Activated CD4-positive, alpha-beta T cell treated with anti-CD3 and anti-CD28 coated beads, Interleukin-2, amount 10 ng/mL, durations not matched to agents 24 days and 14 days (primary cell): ENCODE measurements at regions of chr14 and their contacts with region 1.

Region 1: DNA sequence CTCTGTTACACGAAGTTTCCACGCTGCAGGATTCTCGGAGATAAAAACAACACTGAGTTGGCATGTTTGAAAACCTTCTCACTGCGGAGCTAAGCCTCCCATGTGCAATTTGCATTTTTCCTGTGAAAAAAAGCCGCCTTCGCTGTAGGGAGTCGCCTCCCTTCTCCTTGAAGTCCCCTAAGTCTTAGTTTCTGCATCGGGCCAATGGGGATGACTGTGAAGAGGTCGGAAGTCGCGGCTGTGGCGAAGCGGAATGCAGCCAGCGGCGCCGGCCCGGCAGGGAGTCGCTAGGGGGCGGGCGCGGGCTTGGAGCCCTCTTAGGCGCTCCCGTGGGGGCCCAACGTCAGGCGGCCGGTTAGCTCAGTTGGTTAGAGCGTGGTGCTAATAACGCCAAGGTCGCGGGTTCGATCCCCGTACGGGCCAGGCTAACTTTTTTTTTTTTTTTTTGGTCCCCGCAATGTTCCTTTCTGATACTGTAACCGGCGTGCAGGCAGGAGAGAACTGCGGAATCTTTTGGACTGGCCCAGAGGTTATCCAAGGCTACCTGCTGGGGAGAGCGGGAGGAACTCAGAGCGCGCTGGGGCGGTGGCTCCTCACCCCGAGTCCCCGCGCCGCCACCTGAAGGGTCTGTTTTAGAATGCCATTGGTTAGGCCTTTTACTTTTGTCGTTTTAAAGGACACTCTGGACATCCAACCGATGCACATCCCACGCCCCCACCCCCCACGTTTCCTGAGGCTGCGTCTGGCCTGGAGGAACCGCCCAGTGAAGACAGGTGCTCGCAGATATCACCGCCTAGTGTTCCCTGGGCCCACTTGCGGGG is 2.6 kb upstream of the ZNF839 start:
- DNase-seq: peak; percentile 99
- H3K4me3 Mint-ChIP-seq: peak overlapping the region; percentile 99
- H3K27ac Mint-ChIP-seq: peak overlapping the region; percentile 97
- H3K4me1 Mint-ChIP-seq: peaks cover 54% of the 10 kb centered on the region
- H3K27me3 Mint-ChIP-seq: peaks cover 2% of the 10 kb centered on the region

Region 2: GRCh38 chr14:101761032-101761880 is 555.7 kb before region 1 on chr14 and contains the start of gene PPP2R5C:
- intact Hi-C with region 1: loop called (anchors 5 kb)
- DNase-seq: peak; percentile 94
- H3K4me3 Mint-ChIP-seq: peak within 1 kb of the TSS; percentile 90
- H3K27ac Mint-ChIP-seq: peak within 1 kb of the TSS; percentile 86
- H3K4me1 Mint-ChIP-seq: peaks cover 39% of the 10 kb centered on the region
- H3K27me3 Mint-ChIP-seq: peaks cover 3% of the 10 kb centered on the region
- total RNA-seq, gene PPP2R5C: 160 and 181 TPM in 2 replicates

Region 3: GRCh38 chr14:101964297-101965144 is 352.4 kb before region 1 on chr14 and contains the start of gene DYNC1H1:
- intact Hi-C with region 1: loop called (anchors 2 kb)
- DNase-seq: peak; percentile 98
- H3K4me3 Mint-ChIP-seq: peak within 1 kb of the TSS; percentile 94
- H3K27ac Mint-ChIP-seq: peak within 1 kb of the TSS; percentile 94
- H3K4me1 Mint-ChIP-seq: peaks cover 35% of the 10 kb centered on the region
- H3K27me3 Mint-ChIP-seq: peaks cover 2% of the 10 kb centered on the region
- total RNA-seq, gene DYNC1H1: 265 and 272 TPM in 2 replicates

Region 4: DNA sequence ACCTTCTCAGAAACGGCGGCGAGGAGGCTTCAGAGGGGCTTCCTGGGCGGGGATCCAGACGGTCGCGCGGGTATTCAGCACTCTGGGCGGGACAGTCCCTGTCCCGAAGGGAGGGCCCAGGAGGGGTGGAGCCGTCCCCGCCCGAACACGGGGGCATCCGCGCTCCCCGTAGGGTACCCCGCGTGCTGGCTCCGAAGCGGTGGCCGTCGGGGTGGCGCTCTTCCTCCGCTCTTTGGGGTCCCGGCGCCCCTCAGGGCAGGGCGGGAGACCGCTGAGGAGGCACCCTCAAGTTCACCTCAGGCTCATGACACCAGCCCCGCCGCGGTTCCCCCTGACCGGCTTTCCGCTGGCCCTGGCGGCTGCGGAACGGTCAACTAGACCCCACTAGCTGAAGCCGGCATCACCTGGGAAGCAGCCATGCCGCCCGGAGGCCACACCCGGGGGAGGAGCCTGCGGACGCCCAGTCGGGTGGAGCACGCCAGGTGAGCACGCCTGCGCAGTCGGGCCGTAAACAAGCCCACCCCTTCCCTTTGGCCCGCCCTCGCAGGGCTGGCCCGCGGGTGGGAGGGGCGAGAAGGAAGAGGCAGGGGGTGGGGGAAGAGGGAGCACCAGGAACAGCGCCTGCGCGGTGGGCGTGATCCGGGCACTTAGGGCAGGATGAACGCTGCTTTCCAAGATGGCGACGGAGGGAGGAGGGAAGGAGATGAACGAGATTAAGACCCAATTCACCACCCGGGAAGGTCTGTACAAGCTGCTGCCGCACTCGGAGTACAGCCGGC is 177.5 kb before region 1 on chr14 and contains the start of gene WDR20:
- intact Hi-C with region 1: loop called (anchors 1 kb)
- DNase-seq: peak; percentile 100
- H3K4me3 Mint-ChIP-seq: peak within 1 kb of the TSS; percentile 97
- H3K27ac Mint-ChIP-seq: peak within 1 kb of the TSS; percentile 95
- H3K4me1 Mint-ChIP-seq: peaks cover 21% of the 10 kb centered on the region
- H3K27me3 Mint-ChIP-seq: no peaks in the 10 kb centered on the region
- total RNA-seq, gene WDR20: 30.4 and 31.0 TPM in 2 replicates

Region 5: GRCh38 chr14:102200690-102201352 is 116.1 kb before region 1 on chr14:
- intact Hi-C with region 1: no loop called
- DNase-seq: no peak
- H3K4me3 Mint-ChIP-seq: peak overlapping the region; percentile 2
- H3K27ac Mint-ChIP-seq: peak overlapping the region; percentile 74
- H3K4me1 Mint-ChIP-seq: peaks cover 40% of the 10 kb centered on the region
- H3K27me3 Mint-ChIP-seq: no peaks in the 10 kb centered on the region

Region 6: GRCh38 chr14:102262929-102263462 is 54.0 kb before region 1 on chr14:
- intact Hi-C with region 1: no loop called
- DNase-seq: no peak
- H3K4me3 Mint-ChIP-seq: no peak overlapping the region
- H3K27ac Mint-ChIP-seq: no peak overlapping the region
- H3K4me1 Mint-ChIP-seq: no peaks in the 10 kb centered on the region
- H3K27me3 Mint-ChIP-seq: peaks cover 4% of the 10 kb centered on the region

Region 7: GRCh38 chr14:102304611-102305509 is 12.1 kb before region 1 on chr14 and contains the start of gene MOK:
- intact Hi-C with region 1: loop called (anchors 1 kb)
- DNase-seq: peak; percentile 100
- H3K4me3 Mint-ChIP-seq: peak within 1 kb of the TSS; percentile 92
- H3K27ac Mint-ChIP-seq: peak within 1 kb of the TSS; percentile 96
- H3K4me1 Mint-ChIP-seq: peaks cover 8% of the 10 kb centered on the region
- H3K27me3 Mint-ChIP-seq: peaks cover 22% of the 10 kb centered on the region
- total RNA-seq, gene MOK: 6.9 and 7.6 TPM in 2 replicates

Region 8: DNA sequence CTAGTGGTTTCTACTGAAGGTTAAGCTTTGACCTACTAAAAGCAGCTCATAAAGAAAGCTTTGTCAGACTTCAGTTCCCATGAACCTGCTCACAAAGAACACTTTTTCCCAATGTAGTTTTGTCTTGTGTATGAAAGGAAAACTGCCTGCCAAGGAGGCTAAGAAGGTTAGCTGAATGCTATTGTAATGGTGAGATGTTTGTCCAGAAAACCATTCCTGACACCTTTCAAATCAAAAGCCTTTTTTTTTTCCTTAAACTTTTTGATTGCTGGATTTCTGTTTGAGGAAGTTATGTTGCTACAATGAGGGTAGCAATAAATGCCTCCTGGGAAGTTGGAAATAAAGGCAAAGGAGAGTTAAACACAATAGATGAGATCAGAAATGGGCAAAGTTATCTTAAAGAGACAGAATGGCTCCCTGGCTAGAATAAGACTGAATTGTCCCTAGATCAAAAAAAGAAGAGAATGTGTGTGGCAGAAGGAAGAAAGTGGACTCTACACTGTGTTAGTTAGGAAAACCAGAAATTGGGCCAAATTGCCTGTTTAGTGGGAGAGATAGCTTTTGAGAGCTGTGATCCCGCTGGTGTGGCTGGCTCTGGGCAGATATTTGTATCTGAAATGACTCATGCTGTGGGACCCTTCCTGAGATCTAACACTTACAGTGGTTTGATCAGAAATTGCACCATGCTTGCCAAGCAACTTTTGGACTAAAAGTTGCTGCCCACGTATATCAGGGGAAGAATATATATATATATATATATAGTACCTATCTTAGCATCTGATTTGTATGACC is 73.3 kb after region 1 on chr14:
- intact Hi-C with region 1: no loop called
- DNase-seq: no peak
- H3K4me3 Mint-ChIP-seq: no peak overlapping the region
- H3K27ac Mint-ChIP-seq: no peak overlapping the region
- H3K4me1 Mint-ChIP-seq: peaks cover 6% of the 10 kb centered on the region
- H3K27me3 Mint-ChIP-seq: no peaks in the 10 kb centered on the region

Region 9: GRCh38 chr14:102524466-102525218 is 207.7 kb after region 1 on chr14:
- intact Hi-C with region 1: loop called (anchors 2 kb)
- DNase-seq: peak; percentile 99
- H3K4me3 Mint-ChIP-seq: peak overlapping the region; percentile 94
- H3K27ac Mint-ChIP-seq: peak overlapping the region; percentile 93
- H3K4me1 Mint-ChIP-seq: peaks cover 26% of the 10 kb centered on the region
- H3K27me3 Mint-ChIP-seq: no peaks in the 10 kb centered on the region